Heart left ventricle (tissue), 16 donors: ENCODE measurements at regions of chr5 and their contacts with region 1.

Region 1: DNA sequence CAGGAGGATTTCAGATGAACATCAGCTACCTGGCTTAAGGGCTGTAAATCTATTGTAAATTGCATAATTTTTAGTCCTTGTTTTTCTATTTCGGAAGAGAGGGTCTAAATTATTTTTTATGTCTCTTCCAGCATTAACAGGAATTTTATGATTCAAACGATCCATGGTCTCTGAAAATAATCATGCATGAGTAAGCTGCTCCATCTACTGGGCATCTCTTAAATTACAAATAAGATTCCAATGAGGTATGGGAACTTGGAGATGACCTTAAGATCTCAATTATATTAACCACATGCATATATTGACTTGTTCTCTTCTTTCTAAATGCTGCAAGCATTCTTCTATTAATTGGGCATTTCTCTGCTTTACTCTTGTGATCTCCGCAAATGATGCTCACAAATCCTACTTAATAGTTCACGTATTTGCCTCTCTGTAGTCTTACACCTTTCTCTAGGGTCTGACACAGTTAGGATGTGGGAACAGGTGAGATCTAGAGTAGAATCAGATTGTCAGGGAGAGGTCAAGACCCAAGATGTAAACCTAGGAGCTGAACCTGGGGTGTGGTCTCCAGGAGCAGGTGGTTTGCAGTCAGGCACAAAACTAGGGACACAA is 86.9 kb downstream of the NUDT12 start:
- DNase-seq: no peak
- ATAC-seq: peak in 2 of 4 donors; percentile 37 to 64
- H3K4me3 ChIP-seq: no peak overlapping the region
- H3K27ac ChIP-seq: no peak overlapping the region
- H3K4me1 ChIP-seq: no peaks in the 10 kb centered on the region
- H3K27me3 ChIP-seq: no peaks in the 10 kb centered on the region
- CTCF ChIP-seq: peak; percentile 51 to 86 (median 73)
- POLR2A ChIP-seq: no peak

Region 2: DNA sequence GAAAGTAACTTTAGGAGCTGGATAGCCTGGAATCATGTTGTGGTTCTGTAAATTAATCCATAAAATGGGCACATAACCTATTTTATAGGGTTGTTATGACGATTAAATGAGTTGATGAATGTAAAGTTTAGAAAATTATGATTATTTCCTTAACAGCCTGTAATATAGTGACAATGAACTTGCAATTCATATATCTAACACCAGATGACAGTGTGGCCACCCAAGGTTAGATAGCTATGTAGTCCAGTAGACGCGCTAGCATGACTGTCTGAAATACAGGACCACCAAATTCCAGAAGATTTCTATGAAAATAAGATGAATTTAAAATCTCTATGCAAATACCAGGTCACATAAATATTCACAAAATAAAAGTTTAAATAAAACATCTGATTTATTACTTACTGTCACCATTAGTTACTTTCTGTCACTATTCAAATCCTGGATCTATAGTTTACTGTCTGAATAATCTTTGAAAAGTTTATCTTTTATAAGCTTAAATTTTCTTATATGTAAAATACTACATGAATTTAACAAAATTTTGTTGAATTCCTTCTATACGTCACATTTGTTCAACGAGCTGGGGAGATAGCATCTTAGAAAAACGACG is 243.2 kb before region 1 on chr5:
- intact Hi-C with region 1: loop called (anchors 1 to 5 kb)
- DNase-seq: no peak
- ATAC-seq: peak in 3 of 4 donors; percentile 76 to 80 (median 79)
- H3K4me3 ChIP-seq: no peak overlapping the region
- H3K27ac ChIP-seq: no peak overlapping the region
- H3K4me1 ChIP-seq: no peaks in the 10 kb centered on the region
- H3K27me3 ChIP-seq: no peaks in the 10 kb centered on the region
- CTCF ChIP-seq: peak; percentile 78 to 94 (median 86)
- POLR2A ChIP-seq: no peak

Region 3: DNA sequence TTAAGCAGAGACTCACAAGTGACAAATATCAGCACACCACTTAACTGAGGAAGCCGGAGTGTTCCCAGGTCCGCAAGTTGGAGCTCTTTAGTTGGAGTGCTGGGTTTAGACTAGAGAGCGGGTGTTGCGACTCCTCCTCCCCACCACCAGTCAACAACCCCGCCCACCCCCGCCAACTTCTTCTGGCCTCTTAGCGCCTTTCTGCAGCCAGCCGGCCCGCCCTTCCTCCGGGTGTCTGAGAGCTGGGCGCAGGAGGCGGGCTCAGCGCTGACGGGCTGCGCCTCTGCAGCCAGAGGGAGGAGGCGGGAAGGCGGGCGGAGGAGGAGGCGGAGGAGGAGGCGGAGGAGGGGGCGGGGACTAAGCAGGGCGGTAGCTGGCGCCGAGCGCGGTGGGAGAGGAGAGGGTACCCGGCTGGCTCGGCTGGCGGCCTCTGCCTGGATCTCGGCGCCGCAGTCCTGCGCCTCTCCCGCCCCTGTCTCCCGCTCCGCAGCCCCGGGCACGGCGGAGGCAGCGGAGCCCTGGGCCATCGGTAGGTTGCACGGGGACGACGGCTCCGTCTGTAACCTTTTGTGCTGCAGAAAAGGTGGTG is 217.3 kb before region 1 on chr5 and contains the start of gene MACIR:
- intact Hi-C with region 1: loop called in 2 of 10 experiments (anchors 2 to 5 kb)
- DNase-seq: peak; percentile 95 to 99 (median 98)
- ATAC-seq: peak; percentile 98 to 99 (median 98)
- H3K4me3 ChIP-seq: peak within 1 kb of the TSS; percentile 63 to 96 (median 92)
- H3K27ac ChIP-seq: peak within 1 kb of the TSS; percentile 76 to 93 (median 84)
- H3K4me1 ChIP-seq: peaks cover 0 to 42% (median 29%) of the 10 kb centered on the region in 12 donors
- H3K27me3 ChIP-seq: no peaks in the 10 kb centered on the region
- CTCF ChIP-seq: peak in 4 of 12 donors; percentile 16 to 37 (median 22)
- POLR2A ChIP-seq: peak in 1 of 2 donors; percentile 85
- total RNA-seq, gene MACIR: 2.7 to 6.0 (median 4.6) TPM

Region 4: DNA sequence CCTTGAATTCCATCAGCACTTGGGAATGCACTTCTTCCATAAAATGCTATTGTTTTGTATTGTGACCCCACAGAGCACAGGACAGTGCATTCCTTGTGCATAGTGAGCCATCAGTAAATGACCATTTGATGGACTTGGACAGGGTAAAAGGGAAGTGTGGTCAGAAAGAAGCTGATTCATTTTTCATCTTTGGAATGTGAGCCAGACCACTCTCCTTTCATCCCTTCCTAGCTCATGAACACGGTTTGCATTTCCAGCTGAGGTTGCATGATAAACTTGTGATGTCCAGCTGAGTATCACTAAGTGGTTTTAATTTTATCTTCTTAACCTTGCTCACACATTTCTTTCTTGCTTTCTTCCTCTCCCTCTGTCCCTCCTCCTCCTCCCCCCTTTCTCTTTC is 14.5 kb before region 1 on chr5:
- intact Hi-C with region 1: loop called in 1 of 10 experiments (anchors 1 kb)
- DNase-seq: no peak
- ATAC-seq: no peak
- H3K4me3 ChIP-seq: no peak overlapping the region
- H3K27ac ChIP-seq: no peak overlapping the region
- H3K4me1 ChIP-seq: peaks cover 0 to 1% (median 0%) of the 10 kb centered on the region in 12 donors
- H3K27me3 ChIP-seq: peaks cover 0 to 6% (median 0%) of the 10 kb centered on the region in 9 donors
- CTCF ChIP-seq: no peak
- POLR2A ChIP-seq: no peak

Region 5: GRCh38 chr5:103532086-103532734 is 56.5 kb after region 1 on chr5:
- intact Hi-C with region 1: no loop called
- DNase-seq: no peak
- ATAC-seq: no peak
- H3K4me3 ChIP-seq: no peak overlapping the region
- H3K27ac ChIP-seq: no peak overlapping the region
- H3K4me1 ChIP-seq: no peaks in the 10 kb centered on the region
- H3K27me3 ChIP-seq: no peaks in the 10 kb centered on the region
- CTCF ChIP-seq: no peak
- POLR2A ChIP-seq: no peak